ENCODE measurements at regions of chr3 and their contacts with region 1.

Region 1: DNA sequence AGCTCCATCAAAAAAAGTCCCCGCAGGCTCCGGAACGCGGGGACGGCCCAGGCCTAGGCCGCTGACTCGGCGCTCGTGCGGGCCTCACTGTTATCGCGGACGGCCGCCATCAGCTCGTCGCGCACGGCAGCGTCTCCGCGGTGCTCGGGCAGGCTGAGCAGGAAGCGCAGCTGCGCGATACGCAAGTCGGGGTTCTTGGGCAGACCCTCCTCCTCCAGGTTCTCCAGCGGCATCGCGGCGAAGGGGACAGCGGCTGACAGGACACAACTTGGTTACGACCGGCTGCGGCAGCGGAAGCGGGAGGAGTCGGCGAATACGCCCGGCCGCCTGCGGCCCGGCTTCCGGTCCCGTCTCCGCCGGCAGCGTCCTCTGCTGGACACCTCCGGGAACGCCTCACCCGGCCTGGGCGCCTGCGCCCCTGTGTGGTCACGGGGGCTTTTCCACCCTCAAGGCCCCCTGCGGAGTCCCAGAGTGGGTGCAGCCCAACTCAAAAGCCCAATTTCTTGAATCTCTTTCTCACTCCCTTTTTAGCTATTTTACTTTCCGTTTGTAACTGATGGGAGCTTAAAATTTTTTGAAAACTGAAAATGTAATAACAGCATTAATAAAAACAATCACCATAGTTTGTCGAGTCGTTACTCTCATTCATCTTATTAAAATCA is at the start of gene PSMD6:
- DNase-seq: peak; percentile 96
- ATAC-seq: peak; percentile 93
- H3K4me3 Mint-ChIP-seq: peak within 1 kb of the TSS; percentile 72
- H3K27ac Mint-ChIP-seq: peak within 1 kb of the TSS; percentile 92
- H3K4me1 Mint-ChIP-seq: peaks cover 25% of the 10 kb centered on the region
- H3K27me3 Mint-ChIP-seq: peaks cover 3% of the 10 kb centered on the region
- total RNA-seq, gene PSMD6: 109 to 117 TPM

Region 2: DNA sequence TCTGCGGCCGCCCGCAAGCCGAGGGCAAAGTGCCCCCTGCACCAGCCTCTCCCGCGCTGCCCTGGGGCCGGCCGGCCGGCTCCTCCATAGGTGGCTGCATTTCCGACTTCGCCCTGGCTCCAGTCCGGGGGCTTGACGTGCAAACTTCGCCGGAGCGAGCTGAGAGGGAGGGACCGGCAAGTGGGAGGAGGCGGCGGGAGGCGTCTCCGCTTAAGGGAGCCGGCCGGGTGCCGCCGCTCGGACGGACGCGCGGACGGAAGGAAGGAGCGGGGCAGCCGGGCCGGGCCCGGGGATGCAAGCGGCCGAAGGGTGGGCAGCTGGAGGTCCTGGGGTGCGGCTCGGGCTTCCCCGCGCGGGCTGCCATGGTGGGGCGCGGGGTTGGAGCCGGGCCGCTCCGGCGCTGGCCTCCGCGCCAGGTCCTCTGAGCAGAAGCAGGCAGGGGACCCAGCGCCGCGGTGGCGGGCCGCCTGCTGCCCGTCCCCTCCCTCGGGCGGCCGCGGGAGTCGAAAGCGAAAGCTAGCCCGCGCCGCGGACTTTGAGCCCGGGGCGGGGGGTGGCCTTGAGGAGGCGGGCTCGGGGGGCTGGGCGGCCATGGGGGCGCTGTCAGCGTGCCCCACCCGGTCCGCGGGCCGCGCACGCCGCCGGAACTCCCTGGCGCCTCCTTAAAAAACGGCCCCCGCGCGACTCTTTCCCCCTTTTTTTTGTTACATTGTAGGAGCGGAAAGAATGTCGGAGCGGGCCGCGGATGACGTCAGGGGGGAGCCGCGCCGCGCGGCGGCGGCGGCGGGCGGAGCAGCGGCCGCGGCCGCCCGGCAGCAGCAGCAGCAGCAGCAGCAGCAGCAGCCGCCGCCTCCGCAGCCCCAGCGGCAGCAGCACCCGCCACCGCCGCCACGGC is 111.2 kb before region 1 on chr3 and contains the start of gene SCAANT1:
- CTCF ChIA-PET with region 1: interaction called, 4 read pairs
- POLR2A ChIA-PET with region 1: no interaction called
- intact Hi-C with region 1: loop called (anchors 1 to 2 kb)
- DNase-seq: peak; percentile 87
- ATAC-seq: peak; percentile 69
- H3K4me3 Mint-ChIP-seq: peak within 1 kb of the TSS; percentile 88
- H3K27ac Mint-ChIP-seq: peak within 1 kb of the TSS; percentile 95
- H3K4me1 Mint-ChIP-seq: peaks cover 44% of the 10 kb centered on the region
- H3K27me3 Mint-ChIP-seq: no peaks in the 10 kb centered on the region
- total RNA-seq, gene SCAANT1: not detected

Region 3: GRCh38 chr3:63967675-63968611 is 55.4 kb before region 1 on chr3:
- CTCF ChIA-PET with region 1: interaction called, 7 read pairs
- POLR2A ChIA-PET with region 1: no interaction called
- intact Hi-C with region 1: loop called (anchors 2 to 5 kb)
- DNase-seq: peak; percentile 54
- ATAC-seq: peak; percentile 50
- H3K4me3 Mint-ChIP-seq: peak overlapping the region; percentile 75
- H3K27ac Mint-ChIP-seq: peak overlapping the region; percentile 89
- H3K4me1 Mint-ChIP-seq: peaks cover 80% of the 10 kb centered on the region
- H3K27me3 Mint-ChIP-seq: no peaks in the 10 kb centered on the region

Region 4: DNA sequence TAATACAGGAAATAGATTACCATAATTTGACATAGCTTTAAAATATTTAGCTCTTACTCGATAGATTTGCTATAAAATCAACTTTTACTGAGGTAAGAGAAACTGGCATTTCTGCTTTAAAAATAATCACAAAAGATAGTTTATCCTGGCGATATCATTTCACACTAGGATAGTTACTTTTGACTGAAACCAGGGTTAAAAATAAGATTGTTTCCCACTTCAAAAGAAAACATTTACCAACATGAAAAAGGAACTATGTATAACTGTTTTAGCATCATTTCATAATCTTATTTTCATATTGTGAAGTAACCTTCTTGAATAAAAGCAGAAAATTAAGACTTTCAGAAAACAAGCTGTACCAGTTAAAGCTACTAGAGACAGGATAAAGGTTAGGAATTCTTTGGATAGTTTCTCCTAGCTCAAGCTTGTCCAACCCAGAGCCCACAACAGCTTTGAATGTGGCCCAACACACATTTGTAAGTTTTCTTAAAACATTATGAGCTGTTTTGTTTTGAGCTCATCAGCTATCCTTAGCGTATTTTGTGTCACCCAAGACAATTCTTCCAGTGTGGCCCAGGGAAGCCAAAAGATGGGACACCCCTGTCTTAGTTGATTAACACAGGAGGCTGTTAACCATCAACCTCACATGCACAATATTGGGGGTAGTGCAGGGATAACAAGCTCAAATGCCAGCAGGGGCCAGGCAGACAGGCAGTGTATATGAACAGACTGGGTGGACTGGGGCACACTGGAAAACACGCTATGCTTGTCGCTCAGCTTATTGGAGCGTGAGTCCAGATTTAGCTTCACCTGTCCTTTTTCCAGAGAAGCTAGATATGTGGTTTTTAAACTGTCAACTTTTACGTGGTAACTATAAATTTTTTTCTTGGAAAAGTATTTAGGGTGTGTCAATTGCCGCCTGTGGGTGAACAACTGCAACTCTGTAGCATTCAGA is 15.0 kb before region 1 on chr3:
- CTCF ChIA-PET with region 1: interaction called, 10 read pairs
- POLR2A ChIA-PET with region 1: interaction called, 5 read pairs
- intact Hi-C with region 1: no loop called
- DNase-seq: no peak
- ATAC-seq: no peak
- H3K4me3 Mint-ChIP-seq: no peak overlapping the region
- H3K27ac Mint-ChIP-seq: no peak overlapping the region
- H3K4me1 Mint-ChIP-seq: peaks cover 15% of the 10 kb centered on the region
- H3K27me3 Mint-ChIP-seq: no peaks in the 10 kb centered on the region

Region 5: DNA sequence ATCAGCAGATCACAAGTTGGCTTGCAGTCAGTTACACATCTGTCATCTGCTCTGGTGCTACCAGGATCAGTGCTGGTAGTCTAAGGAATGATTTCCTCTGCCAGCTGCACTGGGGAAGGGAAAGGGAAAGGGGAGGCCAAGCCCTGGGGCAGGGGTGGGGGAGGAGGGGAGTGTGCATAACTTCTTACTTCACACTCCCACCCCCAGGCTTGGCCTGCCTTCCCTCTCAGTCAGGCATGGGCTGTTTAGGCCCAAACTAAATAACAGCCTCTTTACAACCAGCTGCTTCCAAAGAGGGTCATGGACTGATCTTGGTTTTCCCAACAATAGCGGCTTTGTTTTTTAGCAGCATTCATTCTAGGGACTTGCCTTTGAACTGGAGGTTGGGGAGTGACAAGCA is 86.1 kb after region 1 on chr3:
- CTCF ChIA-PET with region 1: no interaction called
- POLR2A ChIA-PET with region 1: no interaction called
- intact Hi-C with region 1: no loop called
- DNase-seq: no peak
- ATAC-seq: no peak
- H3K4me3 Mint-ChIP-seq: no peak overlapping the region
- H3K27ac Mint-ChIP-seq: no peak overlapping the region
- H3K4me1 Mint-ChIP-seq: no peaks in the 10 kb centered on the region
- H3K27me3 Mint-ChIP-seq: peaks cover 6% of the 10 kb centered on the region

Measured in activated CD4-positive, alpha-beta T cell treated with anti-CD3 and anti-CD28 coated beads for 36 hours (primary cell).